Lower leg skin (tissue), 4 donors: ENCODE measurements at regions of chr11 and their contacts with region 1.

Region 1: GRCh38 chr11:117946842-117947526 is 17.8 kb upstream of the TMPRSS13 start:
- DNase-seq: peak; percentile 83 to 97
- H3K4me3 ChIP-seq: no peak overlapping the region
- CTCF ChIP-seq: peak in 1 of 3 donors; percentile 95
- POLR2A ChIP-seq: no peak

Region 2: GRCh38 chr11:118051611-118052461 is 104.9 kb after region 1 on chr11:
- intact Hi-C with region 1: loop called (anchors 10 kb)
- DNase-seq: peak in 1 of 2 donors; percentile 81
- H3K4me3 ChIP-seq: no peak overlapping the region
- CTCF ChIP-seq: no peak
- POLR2A ChIP-seq: no peak